ENCODE measurements at regions of chr5 and their contacts with region 1.

Region 1: DNA sequence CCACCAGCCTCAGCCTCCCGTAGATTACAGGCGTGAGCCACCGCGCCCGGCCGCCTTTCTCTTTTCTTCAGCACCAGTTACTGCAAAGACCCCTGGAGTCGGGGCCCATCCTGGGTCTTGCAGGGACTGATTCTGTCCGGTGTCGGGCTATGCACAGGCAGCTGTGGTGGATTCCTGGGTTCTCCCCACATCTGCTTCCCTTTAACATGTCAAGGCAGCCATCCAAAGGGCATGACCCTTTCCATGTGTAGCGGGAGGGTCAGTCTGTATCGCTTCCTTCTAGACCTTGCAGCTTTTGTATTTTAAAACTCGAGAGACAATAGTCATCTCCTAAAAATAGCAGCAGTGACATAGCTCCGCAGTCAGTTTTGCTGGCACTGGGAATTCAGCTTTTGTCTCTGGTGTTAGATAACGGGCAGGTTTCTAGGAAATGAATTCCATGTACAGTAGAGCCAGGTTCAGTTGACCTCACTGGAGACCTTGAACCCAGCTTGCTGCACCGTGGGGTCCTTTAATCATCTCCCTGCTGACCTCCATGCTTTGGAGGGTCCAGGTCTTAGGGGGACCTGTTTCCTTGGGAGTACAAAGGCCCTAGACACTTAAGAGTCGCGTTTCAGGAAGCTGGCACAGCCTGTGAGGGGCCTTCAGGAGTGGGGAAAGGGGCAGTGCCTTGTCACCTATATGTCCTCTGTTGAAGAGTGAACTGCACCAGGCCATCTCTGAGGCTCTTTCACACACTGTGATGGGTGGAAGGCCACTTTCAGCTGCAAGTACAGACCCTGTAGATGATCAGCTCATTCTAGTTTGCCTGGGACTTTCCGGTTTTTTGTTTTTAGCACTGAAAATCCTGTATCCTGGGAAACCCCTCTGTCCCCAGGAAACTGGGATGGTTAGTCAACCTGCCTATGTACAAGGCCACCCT is 13.8 kb downstream of the ANKRD33B start:
- DNase-seq: no peak
- H3K4me3 Mint-ChIP-seq: no peak overlapping the region
- H3K27ac Mint-ChIP-seq: no peak overlapping the region
- H3K4me1 Mint-ChIP-seq: peaks cover 28% of the 10 kb centered on the region
- H3K27me3 Mint-ChIP-seq: no peaks in the 10 kb centered on the region

Region 2: GRCh38 chr5:10564838-10565784 is 12.5 kb before region 1 on chr5:
- CTCF ChIA-PET with region 1: interaction called, 13 read pairs
- POLR2A ChIA-PET with region 1: interaction called, 4 read pairs
- DNase-seq: no peak
- H3K4me3 Mint-ChIP-seq: peak overlapping the region; percentile 71
- H3K27ac Mint-ChIP-seq: peak overlapping the region; percentile 80
- H3K4me1 Mint-ChIP-seq: peaks cover 25% of the 10 kb centered on the region
- H3K27me3 Mint-ChIP-seq: peaks cover 21% of the 10 kb centered on the region